Testis (tissue), 5 donors: ENCODE measurements at regions of chr13 and their contacts with region 1.

Region 1: DNA sequence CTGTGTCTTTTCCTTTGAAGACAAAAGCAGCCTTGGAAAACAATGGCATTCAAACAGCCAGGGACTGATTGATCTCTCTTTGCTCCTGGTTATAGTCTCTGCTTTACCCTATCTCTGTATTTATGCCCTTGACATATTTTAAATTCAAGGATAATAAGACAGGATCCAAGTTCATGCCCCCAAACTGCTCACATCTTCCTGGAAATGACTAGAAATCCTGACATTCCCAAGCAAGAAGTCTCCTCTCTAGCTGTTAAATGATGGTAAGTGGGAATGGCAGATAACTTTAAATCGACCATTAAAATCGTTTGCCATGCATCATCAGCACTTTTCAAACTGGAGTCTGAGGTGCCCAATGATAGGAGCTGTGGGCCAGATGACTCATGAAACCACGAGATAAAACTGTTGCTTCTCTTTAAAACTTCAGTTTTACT is 435.6 kb downstream of the FOXO1 start:
- DNase-seq: no peak
- H3K4me3 ChIP-seq: no peak overlapping the region
- H3K27ac ChIP-seq: no peak overlapping the region
- H3K4me1 ChIP-seq: no peaks in the 10 kb centered on the region
- H3K27me3 ChIP-seq: no peaks in the 10 kb centered on the region
- CTCF ChIP-seq: no peak
- POLR2A ChIP-seq: no peak

Region 2: GRCh38 chr13:39729156-39729555 is 501.7 kb before region 1 on chr13:
- intact Hi-C with region 1: no loop called
- DNase-seq: no peak
- H3K4me3 ChIP-seq: no peak overlapping the region
- H3K27ac ChIP-seq: no peak overlapping the region
- H3K4me1 ChIP-seq: no peaks in the 10 kb centered on the region
- H3K27me3 ChIP-seq: no peaks in the 10 kb centered on the region
- CTCF ChIP-seq: no peak
- POLR2A ChIP-seq: no peak

Region 3: DNA sequence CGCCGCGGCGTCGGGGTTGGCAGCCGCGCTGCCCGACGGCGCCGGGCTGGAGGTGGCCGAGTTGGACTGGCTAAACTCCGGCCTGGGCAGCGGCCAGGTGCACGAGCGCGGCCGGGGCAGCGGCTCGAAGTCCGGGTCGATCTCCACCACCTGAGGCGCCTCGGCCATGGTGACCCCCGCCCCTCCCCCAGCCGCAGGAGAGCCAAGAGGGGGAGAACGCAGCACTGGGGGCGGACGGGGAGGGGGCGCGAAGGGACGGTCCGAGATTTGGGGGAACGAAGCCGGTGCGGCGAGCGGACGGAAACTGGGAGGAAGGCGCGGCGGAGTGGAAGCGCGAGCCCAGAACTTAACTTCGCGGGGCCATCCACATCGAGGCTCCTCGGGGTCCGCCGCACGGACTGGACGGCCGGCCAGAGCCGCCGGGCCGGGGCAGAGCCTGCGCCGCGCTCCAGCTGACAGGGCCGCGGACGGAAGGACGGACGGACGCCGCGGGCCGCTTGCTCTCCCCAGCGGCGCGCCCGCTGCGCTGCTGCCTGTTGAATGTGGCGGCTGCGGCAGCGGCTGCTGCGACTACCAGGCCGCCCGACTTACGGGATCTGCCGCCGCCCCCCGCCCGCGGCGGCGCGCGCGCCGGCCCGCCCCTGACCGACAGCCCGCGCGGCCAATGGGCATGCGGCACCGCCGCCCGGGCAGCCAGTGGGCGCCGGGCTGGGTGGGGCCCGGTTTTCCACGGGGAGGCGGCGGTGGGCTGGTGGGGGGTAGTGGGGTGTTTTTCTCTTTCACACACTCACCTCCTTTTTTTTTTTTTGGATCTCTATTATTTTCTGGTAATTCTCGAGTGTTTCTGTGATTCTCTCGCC is 435.4 kb after region 1 on chr13 and contains the start of gene FOXO1:
- intact Hi-C with region 1: loop called (anchors 10 kb)
- DNase-seq: peak; percentile 89
- H3K4me3 ChIP-seq: peak within 1 kb of the TSS; percentile 91 to 95
- H3K27ac ChIP-seq: peak within 1 kb of the TSS; percentile 98 to 99
- H3K4me1 ChIP-seq: peaks cover 28% of the 10 kb centered on the region
- H3K27me3 ChIP-seq: no peaks in the 10 kb centered on the region
- CTCF ChIP-seq: no peak
- POLR2A ChIP-seq: peak; percentile 73
- total RNA-seq, gene FOXO1: 52.2 to 58.7 TPM